ENCODE measurements at regions of chr6 and their contacts with region 1.

Region 1: DNA sequence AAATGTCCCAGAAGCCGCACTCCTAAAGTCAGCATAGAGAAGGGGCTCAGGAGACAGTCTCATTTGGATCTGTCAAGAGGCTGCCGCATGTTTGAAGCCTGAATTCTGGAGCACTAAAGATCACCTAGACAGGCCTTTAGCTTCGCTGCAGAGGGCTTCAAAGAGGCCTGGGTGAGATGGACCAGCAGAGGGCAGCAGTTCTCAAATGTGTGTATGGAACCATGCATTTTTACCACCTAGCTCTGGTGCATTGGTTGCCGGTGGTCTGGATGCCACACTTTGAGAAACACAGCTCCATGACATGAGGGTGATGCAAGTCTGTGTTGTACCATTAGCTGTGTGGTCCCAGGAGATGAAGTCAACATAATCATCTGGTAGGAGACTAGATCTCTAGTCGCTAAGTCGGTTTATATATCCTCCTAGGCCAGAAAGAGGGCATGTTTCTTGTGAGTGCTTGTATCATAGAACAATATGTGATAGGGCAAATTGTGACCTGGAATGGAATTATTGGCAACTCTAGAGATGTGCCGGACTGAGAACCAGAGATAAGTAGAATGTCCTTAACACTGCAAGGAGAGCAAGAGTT is 64.8 kb downstream of the KIAA0319 start:
- DNase-seq: no peak
- H3K4me3 ChIP-seq: no peak overlapping the region
- H3K27ac ChIP-seq: no peak overlapping the region
- H3K4me1 ChIP-seq: peaks cover 5 to 14% (median 12%) of the 10 kb centered on the region in 4 donors
- H3K27me3 ChIP-seq: no peaks in the 10 kb centered on the region
- CTCF ChIP-seq: peak; percentile 72 to 88 (median 77)
- EP300 ChIP-seq: no peak
- POLR2A ChIP-seq: no peak

Region 2: DNA sequence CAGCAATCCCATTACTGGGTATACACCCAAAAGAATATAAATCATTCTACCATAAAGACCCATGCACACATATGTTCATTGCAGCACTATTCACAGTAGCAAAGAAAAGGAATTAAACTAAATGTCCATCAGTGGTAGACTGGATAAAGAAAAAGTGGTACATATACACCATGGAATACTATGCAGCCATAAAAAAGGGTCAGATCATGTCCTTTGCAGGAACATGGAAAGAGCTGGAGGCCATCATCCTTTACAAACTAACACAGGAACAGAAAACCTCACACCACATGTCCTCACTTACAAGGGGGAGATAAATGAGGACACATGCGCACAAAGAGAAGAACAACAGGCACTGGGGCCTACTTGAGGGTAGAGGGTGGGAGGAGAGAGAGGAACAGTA is 284.2 kb before region 1 on chr6:
- intact Hi-C with region 1: no loop called
- DNase-seq: no peak
- H3K4me3 ChIP-seq: no peak overlapping the region
- H3K27ac ChIP-seq: no peak overlapping the region
- H3K4me1 ChIP-seq: no peaks in the 10 kb centered on the region
- H3K27me3 ChIP-seq: no peaks in the 10 kb centered on the region
- CTCF ChIP-seq: no peak
- EP300 ChIP-seq: no peak
- POLR2A ChIP-seq: no peak

Region 3: GRCh38 chr6:24666641-24667377 is 85.6 kb after region 1 on chr6 and contains the starts of genes ACOT13 and TDP2:
- intact Hi-C with region 1: loop called (anchors 5 kb)
- DNase-seq: peak; percentile 97
- H3K4me3 ChIP-seq: peak within 1 kb of the TSS; percentile 78 to 92 (median 83)
- H3K27ac ChIP-seq: peak within 1 kb of the TSS; percentile 86 to 92 (median 88)
- H3K4me1 ChIP-seq: peaks cover 26 to 46% (median 36%) of the 10 kb centered on the region in 4 donors
- H3K27me3 ChIP-seq: no peaks in the 10 kb centered on the region
- CTCF ChIP-seq: peak; percentile 37 to 67 (median 51)
- EP300 ChIP-seq: no peak
- POLR2A ChIP-seq: peak; percentile 71
- total RNA-seq, gene ACOT13: 5.8 to 9.4 (median 7.2) TPM
- total RNA-seq, gene TDP2: 25.2 to 44.4 (median 37.6) TPM

Region 4: GRCh38 chr6:24694198-24694597 is 113.0 kb after region 1 on chr6:
- intact Hi-C with region 1: loop called (anchors 2 kb)
- DNase-seq: no peak
- H3K4me3 ChIP-seq: no peak overlapping the region
- H3K27ac ChIP-seq: no peak overlapping the region
- H3K4me1 ChIP-seq: peaks cover 0 to 7% (median 0%) of the 10 kb centered on the region in 4 donors
- H3K27me3 ChIP-seq: no peaks in the 10 kb centered on the region
- CTCF ChIP-seq: no peak
- EP300 ChIP-seq: no peak
- POLR2A ChIP-seq: no peak

Region 5: DNA sequence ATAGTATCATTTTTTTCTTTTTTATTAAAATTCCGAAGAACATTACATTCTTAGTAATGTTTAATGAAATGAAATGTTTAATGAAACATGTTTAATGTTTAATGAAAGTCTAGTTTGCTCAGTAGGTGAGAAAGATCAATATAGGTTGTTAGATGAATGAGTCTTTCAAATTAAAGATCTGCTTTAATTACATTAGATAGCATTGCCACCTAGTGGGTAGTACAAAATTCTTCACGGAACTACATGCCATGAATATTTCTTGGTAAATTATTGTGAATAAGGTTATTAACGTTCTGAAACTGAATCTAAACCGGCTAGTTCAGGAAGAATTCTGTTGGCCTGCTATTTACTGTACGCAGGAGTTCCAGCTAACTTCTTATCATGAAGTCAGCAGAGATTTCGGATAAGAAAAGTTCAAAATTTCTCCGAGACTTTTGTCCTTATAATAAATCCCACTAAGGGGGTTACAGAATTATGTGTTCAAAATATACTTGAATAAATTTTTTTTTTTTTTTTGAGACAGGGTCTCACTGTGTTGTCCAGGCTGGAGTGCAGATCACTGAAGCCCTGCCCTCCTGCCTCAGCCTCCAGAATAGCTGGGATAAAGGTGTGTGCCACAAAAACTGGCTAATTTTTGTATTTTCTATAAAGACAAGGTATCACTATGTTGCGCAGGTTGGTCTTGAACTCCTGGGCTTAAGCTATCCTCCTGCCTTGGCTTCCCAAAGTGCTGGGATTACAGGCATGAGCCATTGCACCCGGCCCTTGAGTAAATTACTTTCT is 185.7 kb after region 1 on chr6:
- intact Hi-C with region 1: loop called (anchors 2 kb)
- DNase-seq: no peak
- H3K4me3 ChIP-seq: no peak overlapping the region
- H3K27ac ChIP-seq: no peak overlapping the region
- H3K4me1 ChIP-seq: no peaks in the 10 kb centered on the region
- H3K27me3 ChIP-seq: no peaks in the 10 kb centered on the region
- CTCF ChIP-seq: peak; percentile 13 to 50 (median 32)
- EP300 ChIP-seq: no peak
- POLR2A ChIP-seq: no peak

Region 6: GRCh38 chr6:24960991-24961475 is 379.9 kb after region 1 on chr6:
- intact Hi-C with region 1: no loop called
- DNase-seq: no peak
- H3K4me3 ChIP-seq: no peak overlapping the region
- H3K27ac ChIP-seq: no peak overlapping the region
- H3K4me1 ChIP-seq: no peaks in the 10 kb centered on the region
- H3K27me3 ChIP-seq: no peaks in the 10 kb centered on the region
- CTCF ChIP-seq: no peak
- EP300 ChIP-seq: no peak
- POLR2A ChIP-seq: no peak

Measured in esophagus muscularis mucosa (tissue), 4 donors.